ENCODE measurements at regions of chr16 and their contacts with region 1.

Region 1: GRCh38 chr16:67173808-67174705 is 3.7 kb downstream of the NOL3 start:
- DNase-seq: peak; percentile 87
- ATAC-seq: peak; percentile 67
- H3K4me3 ChIP-seq: peak overlapping the region; percentile 71
- H3K27ac ChIP-seq: peak overlapping the region; percentile 69
- H3K4me1 ChIP-seq: peaks cover 51% of the 10 kb centered on the region
- H3K27me3 ChIP-seq: no peaks in the 10 kb centered on the region
- CTCF ChIP-seq: peak; percentile 16; the same call in 1 of the 2 replicates

Region 2: GRCh38 chr16:66961065-66961744 is 212.9 kb before region 1 on chr16 and contains the start of gene CES3:
- CTCF ChIA-PET with region 1: interaction called, 24 read pairs
- POLR2A ChIA-PET with region 1: no interaction called
- intact Hi-C with region 1: no loop called
- DNase-seq: peak; percentile 73
- ATAC-seq: peak; percentile 97
- H3K4me3 ChIP-seq: no peak within 1 kb of the TSS
- H3K27ac ChIP-seq: no peak within 1 kb of the TSS
- H3K4me1 ChIP-seq: no peaks in the 10 kb centered on the region
- H3K27me3 ChIP-seq: no peaks in the 10 kb centered on the region
- CTCF ChIP-seq: peak; percentile 85
- total RNA-seq, gene CES3: 0.26 and 0.58 TPM in 2 replicates

Region 3: GRCh38 chr16:67191995-67192681 is 18.1 kb after region 1 on chr16 and contains the start of gene E2F4:
- CTCF ChIA-PET with region 1: no interaction called
- POLR2A ChIA-PET with region 1: no interaction called
- intact Hi-C with region 1: no loop called
- DNase-seq: peak; percentile 88
- ATAC-seq: peak; percentile 95
- H3K4me3 ChIP-seq: peak within 1 kb of the TSS; percentile 98
- H3K27ac ChIP-seq: peak within 1 kb of the TSS; percentile 32
- H3K4me1 ChIP-seq: peaks cover 14% of the 10 kb centered on the region
- H3K27me3 ChIP-seq: no peaks in the 10 kb centered on the region
- CTCF ChIP-seq: no peak
- total RNA-seq, gene E2F4: 86.2 and 107 TPM in 2 replicates